ENCODE measurements at regions of chr12 and their contacts with region 1.

Region 1: DNA sequence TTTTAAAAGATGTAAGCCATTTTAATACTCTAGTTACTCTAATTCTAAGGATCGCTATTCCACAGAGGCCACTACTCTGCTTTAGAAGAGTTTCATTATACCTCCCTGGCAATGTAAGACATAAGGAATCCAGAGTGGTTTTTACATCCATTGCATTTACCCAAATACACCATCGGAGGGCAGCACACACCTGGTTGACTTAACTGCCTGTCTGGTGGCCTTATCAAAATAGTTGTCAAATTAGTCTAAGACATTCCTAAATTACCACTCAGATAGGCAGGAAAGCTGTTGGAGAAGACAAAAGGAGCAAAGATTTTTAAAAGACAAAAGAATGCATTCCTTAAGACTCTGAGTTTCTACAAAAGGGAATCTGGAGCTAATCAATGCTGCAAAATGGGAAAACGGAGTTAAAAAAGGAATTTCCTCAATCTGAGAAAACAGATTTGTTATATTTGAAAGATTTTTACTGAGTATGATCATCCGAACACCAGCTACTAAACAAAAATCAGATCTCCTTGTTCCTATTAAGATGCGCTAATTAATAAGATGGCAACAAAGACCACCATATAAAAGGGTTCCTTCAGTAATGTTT is 33.8 kb upstream of the FGD4 start:
- DNase-seq: peak in 1 of 2 donors; percentile 57
- ATAC-seq: peak in 5 of 8 donors; percentile 62 to 76 (median 71)
- H3K4me3 ChIP-seq: no peak overlapping the region
- H3K27ac ChIP-seq: no peak overlapping the region
- H3K4me1 ChIP-seq: peaks cover 0 to 7% (median 2%) of the 10 kb centered on the region in 9 donors
- H3K27me3 ChIP-seq: no peaks in the 10 kb centered on the region
- CTCF ChIP-seq: peak; percentile 64 to 87 (median 84)

Region 2: DNA sequence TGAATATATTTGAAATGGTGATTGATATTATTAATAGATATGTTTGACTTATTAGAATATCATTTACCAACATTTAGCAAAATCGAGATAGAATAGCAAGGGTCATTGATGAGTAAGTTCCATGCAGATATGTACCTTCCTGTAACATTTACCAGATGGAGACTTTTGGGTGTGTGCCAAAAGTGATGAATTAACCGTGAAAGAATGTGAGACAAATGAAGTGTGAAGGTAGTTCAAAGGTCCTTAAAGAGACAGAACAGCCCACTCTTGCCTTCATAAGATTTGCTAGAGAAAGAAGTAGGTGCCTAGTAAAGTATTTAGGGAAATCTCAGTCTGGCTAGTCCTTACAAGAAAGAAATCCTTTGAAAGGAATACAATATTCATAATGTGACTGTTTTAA is 79.3 kb after region 1 on chr12:
- intact Hi-C with region 1: loop called in 1 of 10 experiments (anchors 10 kb)
- DNase-seq: no peak
- ATAC-seq: no peak
- H3K4me3 ChIP-seq: no peak overlapping the region
- H3K27ac ChIP-seq: no peak overlapping the region
- H3K4me1 ChIP-seq: peaks cover 0 to 45% (median 27%) of the 10 kb centered on the region in 9 donors
- H3K27me3 ChIP-seq: no peaks in the 10 kb centered on the region
- CTCF ChIP-seq: no peak

Region 3: GRCh38 chr12:32659908-32660440 is 294.4 kb after region 1 on chr12:
- intact Hi-C with region 1: loop called in 5 of 10 experiments (anchors 5 kb)
- DNase-seq: no peak
- ATAC-seq: no peak
- H3K4me3 ChIP-seq: no peak overlapping the region
- H3K27ac ChIP-seq: peak overlapping the region in 7 of 10 donors; percentile 6 to 59 (median 29)
- H3K4me1 ChIP-seq: peaks cover 0 to 26% (median 11%) of the 10 kb centered on the region in 9 donors
- H3K27me3 ChIP-seq: no peaks in the 10 kb centered on the region
- CTCF ChIP-seq: no peak

Region 4: DNA sequence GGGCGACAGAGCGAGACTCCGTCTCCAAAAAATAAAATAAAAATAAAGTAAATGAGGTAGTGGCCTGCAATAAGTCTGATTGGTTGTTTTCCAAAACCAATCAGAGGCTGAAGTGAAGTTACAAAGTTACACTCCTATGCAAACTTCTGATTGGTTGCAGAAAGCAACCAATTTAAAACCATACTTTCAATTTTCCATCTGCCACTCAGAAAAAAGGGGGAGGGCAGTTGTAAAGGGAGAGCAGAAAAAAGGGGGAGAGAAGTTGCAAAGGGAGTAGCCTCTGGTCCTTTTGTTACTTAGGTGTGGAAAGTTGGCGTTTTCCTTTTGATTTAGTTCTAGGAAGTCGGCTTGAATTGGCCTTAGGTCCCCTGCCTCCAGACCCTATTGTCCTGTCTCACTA is 300.9 kb after region 1 on chr12:
- intact Hi-C with region 1: loop called in 7 of 10 experiments (anchors 5 kb)
- DNase-seq: no peak
- ATAC-seq: no peak
- H3K4me3 ChIP-seq: peak overlapping the region in 2 of 10 donors; percentile 16 to 24
- H3K27ac ChIP-seq: no peak overlapping the region
- H3K4me1 ChIP-seq: peaks cover 0 to 1% (median 0%) of the 10 kb centered on the region in 9 donors
- H3K27me3 ChIP-seq: no peaks in the 10 kb centered on the region
- CTCF ChIP-seq: no peak

Region 5: DNA sequence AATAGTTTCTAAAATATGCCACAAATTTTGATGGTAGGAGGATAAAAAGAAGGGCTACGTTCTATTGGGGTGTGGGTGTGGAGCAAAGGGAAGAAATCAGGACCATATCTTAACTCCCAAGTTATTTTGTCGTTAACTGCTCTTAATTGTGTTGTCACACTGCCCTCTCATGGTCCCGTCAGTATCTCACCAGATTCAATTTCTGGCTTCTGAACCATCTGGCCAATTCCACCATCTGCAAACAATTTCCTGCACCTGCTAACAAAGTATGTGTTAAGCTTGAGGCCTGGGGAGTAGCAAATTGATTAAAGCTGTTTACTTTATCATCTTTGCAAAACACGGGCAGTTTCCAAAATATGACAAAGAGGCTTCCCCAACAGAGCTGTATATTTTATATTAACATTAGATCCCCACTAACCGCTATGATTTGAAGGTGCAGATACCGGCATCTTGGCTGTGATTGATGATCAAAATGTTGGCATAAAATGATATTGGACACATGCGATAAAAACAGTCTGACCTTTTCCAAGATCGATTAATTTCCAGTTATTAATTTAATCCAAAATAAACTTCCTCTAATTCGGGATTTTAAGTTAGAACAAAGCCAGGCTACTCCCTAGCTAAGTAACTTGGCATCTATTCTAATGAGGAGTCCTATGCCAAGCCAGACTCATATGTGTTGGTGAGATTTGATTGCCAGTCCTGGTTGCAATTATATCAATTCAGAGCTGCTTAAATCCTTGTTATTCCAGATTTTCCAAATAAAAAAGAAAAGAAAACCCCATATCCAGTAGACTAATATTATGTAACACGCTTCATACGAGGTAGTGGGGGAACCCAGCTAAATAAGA is 306.6 kb after region 1 on chr12:
- intact Hi-C with region 1: loop called (anchors 1 to 5 kb)
- DNase-seq: peak in 1 of 2 donors; percentile 60
- ATAC-seq: peak; percentile 63 to 91 (median 86)
- H3K4me3 ChIP-seq: no peak overlapping the region
- H3K27ac ChIP-seq: no peak overlapping the region
- H3K4me1 ChIP-seq: peaks cover 0 to 12% (median 0%) of the 10 kb centered on the region in 9 donors
- H3K27me3 ChIP-seq: no peaks in the 10 kb centered on the region
- CTCF ChIP-seq: peak; percentile 39 to 78 (median 68)

Measured in heart right ventricle (tissue), 16 donors.